ENCODE measurements at regions of chr12 and their contacts with region 1.

Region 1: GRCh38 chr12:121060149-121061001 is 21.3 kb upstream of the OASL start:
- DNase-seq: peak; percentile 67
- ATAC-seq: peak; percentile 83
- H3K4me3 ChIP-seq: peak overlapping the region; percentile 24 to 35
- H3K27ac ChIP-seq: peak overlapping the region; percentile 47
- H3K4me1 ChIP-seq: peaks cover 5 to 14% of the 10 kb centered on the region in 2 experiments; a peak in 3 of 4 replicates
- H3K27me3 ChIP-seq: no peaks in the 10 kb centered on the region
- CTCF ChIP-seq: peak; percentile 41 to 81 (median 57)
- POLR2A ChIP-seq: no peak
- RAD21 ChIP-seq: peak; percentile 81

Region 2: GRCh38 chr12:121095544-121096198 is 35.3 kb after region 1 on chr12:
- CTCF ChIA-PET with region 1: interaction called, 16 read pairs
- POLR2A ChIA-PET with region 1: no interaction called
- RAD21 ChIA-PET with region 1: no interaction called
- intact Hi-C with region 1: loop called (anchors 5 kb)
- DNase-seq: peak; percentile 48
- ATAC-seq: peak; percentile 97
- H3K4me3 ChIP-seq: peak overlapping the region; percentile 36 to 52
- H3K27ac ChIP-seq: no peak overlapping the region
- H3K4me1 ChIP-seq: peaks cover 3 to 14% of the 10 kb centered on the region in 2 experiments; a peak in 3 of 4 replicates
- H3K27me3 ChIP-seq: no peaks in the 10 kb centered on the region
- CTCF ChIP-seq: peak; percentile 68 to 84 (median 70)
- POLR2A ChIP-seq: peak; percentile 23
- RAD21 ChIP-seq: peak; percentile 81

Region 3: DNA sequence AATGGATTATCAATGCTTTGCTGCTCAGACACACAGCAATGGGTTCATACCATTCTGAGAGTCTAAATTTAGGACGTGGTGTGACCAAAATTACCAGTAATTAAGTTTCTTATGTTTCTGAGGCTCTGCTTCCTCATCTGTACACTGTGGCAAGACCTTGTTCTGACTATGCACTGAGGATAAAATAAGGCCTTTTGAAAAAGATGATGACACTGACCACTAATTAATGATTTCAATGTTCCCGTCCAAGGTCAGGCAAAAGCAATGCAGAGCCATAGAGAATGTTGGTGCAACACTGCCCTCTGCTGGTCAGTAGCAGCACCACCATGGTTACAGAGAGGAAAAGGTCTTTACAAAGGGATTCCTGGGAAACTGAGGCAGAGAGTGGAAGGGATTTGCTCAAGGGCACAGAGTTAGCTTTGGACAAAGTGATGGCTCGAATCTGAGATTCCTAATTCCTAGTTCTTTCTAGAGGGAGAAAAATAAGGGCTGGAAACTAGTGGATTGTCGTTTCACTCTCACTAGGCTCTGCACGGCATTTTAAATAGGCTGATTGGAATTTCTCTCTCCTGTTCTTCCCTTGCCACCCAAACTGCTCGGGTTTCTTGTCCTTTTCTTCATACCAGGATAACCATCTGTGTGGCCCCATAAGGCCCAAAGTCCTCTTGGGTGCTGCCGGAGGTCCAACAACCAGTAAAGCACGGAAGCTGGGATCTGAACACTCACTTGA is 50.0 kb after region 1 on chr12:
- CTCF ChIA-PET with region 1: no interaction called
- POLR2A ChIA-PET with region 1: no interaction called
- RAD21 ChIA-PET with region 1: no interaction called
- intact Hi-C with region 1: loop called (anchors 5 kb)
- DNase-seq: peak; percentile 56
- ATAC-seq: peak; percentile 92
- H3K4me3 ChIP-seq: no peak overlapping the region
- H3K27ac ChIP-seq: no peak overlapping the region
- H3K4me1 ChIP-seq: no peaks in the 10 kb centered on the region
- H3K27me3 ChIP-seq: no peaks in the 10 kb centered on the region
- CTCF ChIP-seq: peak; percentile 85 to 99 (median 93)
- POLR2A ChIP-seq: no peak
- RAD21 ChIP-seq: peak; percentile 95

Region 4: GRCh38 chr12:121223292-121224285 is 163.2 kb after region 1 on chr12:
- CTCF ChIA-PET with region 1: no interaction called
- POLR2A ChIA-PET with region 1: no interaction called
- RAD21 ChIA-PET with region 1: no interaction called
- intact Hi-C with region 1: loop called (anchors 1 kb)
- DNase-seq: no peak
- ATAC-seq: peak; percentile 90
- H3K4me3 ChIP-seq: no peak overlapping the region
- H3K27ac ChIP-seq: no peak overlapping the region
- H3K4me1 ChIP-seq: no peaks in the 10 kb centered on the region
- H3K27me3 ChIP-seq: no peaks in the 10 kb centered on the region
- CTCF ChIP-seq: peak; percentile 34 to 58 (median 51); a peak in 5 of 6 replicates
- POLR2A ChIP-seq: no peak
- RAD21 ChIP-seq: peak; percentile 70

Region 5: DNA sequence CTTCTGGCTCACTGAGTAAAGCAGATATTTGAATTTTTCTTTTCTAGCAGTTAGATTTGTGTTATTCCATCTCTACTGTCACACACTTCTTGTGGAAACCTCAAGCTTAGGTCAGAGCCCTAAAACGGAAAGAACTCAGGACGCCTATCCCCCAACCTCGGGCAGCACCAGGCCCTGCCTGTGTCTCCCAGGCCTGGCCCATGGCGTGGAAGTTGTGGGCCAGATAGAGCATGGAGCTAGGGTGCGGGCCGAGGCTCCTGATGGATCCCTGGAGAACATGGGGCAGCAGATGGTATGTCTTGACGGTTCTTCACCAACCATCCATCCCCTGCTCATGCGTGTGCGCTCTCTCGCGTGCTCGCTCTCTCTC is 170.1 kb after region 1 on chr12:
- CTCF ChIA-PET with region 1: interaction called, 7 read pairs
- POLR2A ChIA-PET with region 1: no interaction called
- RAD21 ChIA-PET with region 1: no interaction called
- intact Hi-C with region 1: loop called (anchors 1 kb)
- DNase-seq: no peak
- ATAC-seq: peak; percentile 34
- H3K4me3 ChIP-seq: no peak overlapping the region
- H3K27ac ChIP-seq: peak overlapping the region; percentile 75
- H3K4me1 ChIP-seq: peaks cover 13 to 20% of the 10 kb centered on the region in 2 experiments
- H3K27me3 ChIP-seq: no peaks in the 10 kb centered on the region
- CTCF ChIP-seq: no peak
- POLR2A ChIP-seq: no peak
- RAD21 ChIP-seq: no peak

Region 6: DNA sequence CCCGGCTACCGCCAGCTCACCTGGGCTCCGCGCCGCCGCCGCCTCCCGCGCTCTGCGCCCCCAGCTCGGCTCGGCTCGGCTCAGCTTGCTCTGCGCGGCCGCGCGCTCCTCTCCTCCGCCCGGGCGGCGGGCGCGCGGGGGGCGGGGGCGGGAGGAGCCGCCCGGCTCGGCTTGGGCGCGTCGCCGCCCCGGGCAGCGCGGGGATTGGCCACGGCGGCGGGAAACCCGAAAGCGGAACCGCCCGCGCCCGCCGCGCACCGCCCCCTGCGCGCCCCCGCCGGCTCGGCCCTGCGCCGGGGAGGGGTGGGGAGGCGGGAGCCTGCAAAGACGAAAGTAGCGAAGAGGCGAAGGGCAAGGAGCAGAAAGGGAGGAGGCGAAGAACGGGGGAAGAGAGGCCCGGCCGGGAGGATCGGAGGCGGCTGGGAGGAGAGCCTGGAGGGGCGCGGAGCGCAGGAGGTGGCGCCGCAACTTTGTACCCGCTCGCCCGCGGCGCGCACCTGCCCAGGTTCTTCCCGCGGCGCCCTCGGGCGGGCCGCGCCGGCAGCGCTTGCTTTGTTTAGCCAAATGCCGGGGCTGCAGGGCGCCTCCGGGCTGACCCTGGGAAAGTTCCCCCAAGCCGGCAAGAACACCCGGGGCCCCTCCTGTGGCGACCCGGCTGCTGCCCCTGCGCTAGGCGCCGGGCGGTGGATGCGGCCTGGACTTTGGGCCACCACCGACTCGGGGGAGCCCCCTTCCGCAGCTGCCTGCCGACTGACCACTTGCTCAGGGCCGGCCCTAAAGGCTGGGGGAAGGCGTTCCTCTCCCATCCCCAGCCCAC is 236.5 kb after region 1 on chr12 and contains the start of gene CAMKK2:
- CTCF ChIA-PET with region 1: no interaction called
- POLR2A ChIA-PET with region 1: no interaction called
- RAD21 ChIA-PET with region 1: no interaction called
- intact Hi-C with region 1: loop called (anchors 5 kb)
- DNase-seq: peak; percentile 54
- ATAC-seq: peak; percentile 82
- H3K4me3 ChIP-seq: peak within 1 kb of the TSS; percentile 88 to 96
- H3K27ac ChIP-seq: peak within 1 kb of the TSS; percentile 85
- H3K4me1 ChIP-seq: peaks cover 3 to 19% of the 10 kb centered on the region in 2 experiments
- H3K27me3 ChIP-seq: no peaks in the 10 kb centered on the region
- CTCF ChIP-seq: 0 out of 6 replicates have a peak, but pooled peaks of 1 of the 3 experiments have one; percentile 7
- POLR2A ChIP-seq: no peak
- RAD21 ChIP-seq: no peak
- total RNA-seq, gene CAMKK2: 33.8 TPM

Region 7: GRCh38 chr12:121443193-121443870 is 383.0 kb after region 1 on chr12:
- CTCF ChIA-PET with region 1: interaction called, 5 read pairs
- POLR2A ChIA-PET with region 1: no interaction called
- RAD21 ChIA-PET with region 1: no interaction called
- intact Hi-C with region 1: loop called (anchors 5 kb)
- DNase-seq: peak; percentile 24
- ATAC-seq: peak; percentile 98
- H3K4me3 ChIP-seq: no peak overlapping the region
- H3K27ac ChIP-seq: no peak overlapping the region
- H3K4me1 ChIP-seq: peaks cover 0 to 3% of the 10 kb centered on the region in 2 experiments; a peak in 1 of 4 replicates
- H3K27me3 ChIP-seq: no peaks in the 10 kb centered on the region
- CTCF ChIP-seq: peak; percentile 81 to 92 (median 89)
- POLR2A ChIP-seq: no peak
- RAD21 ChIP-seq: peak; percentile 84

Measured in HCT116 (cell line).